Head of caudate nucleus (tissue), 42 donors: ENCODE measurements at regions of chr21 and their contacts with region 1.

Region 1: GRCh38 chr21:41612674-41613532 is 104.9 kb upstream of the TMPRSS2 start:
- DNase-seq: peak; percentile 29 to 86 (median 64)

Region 2: GRCh38 chr21:41419911-41420862 is 192.7 kb before region 1 on chr21:
- intact Hi-C with region 1: no loop called
- DNase-seq: peak; percentile 25 to 87 (median 64)

Region 3: DNA sequence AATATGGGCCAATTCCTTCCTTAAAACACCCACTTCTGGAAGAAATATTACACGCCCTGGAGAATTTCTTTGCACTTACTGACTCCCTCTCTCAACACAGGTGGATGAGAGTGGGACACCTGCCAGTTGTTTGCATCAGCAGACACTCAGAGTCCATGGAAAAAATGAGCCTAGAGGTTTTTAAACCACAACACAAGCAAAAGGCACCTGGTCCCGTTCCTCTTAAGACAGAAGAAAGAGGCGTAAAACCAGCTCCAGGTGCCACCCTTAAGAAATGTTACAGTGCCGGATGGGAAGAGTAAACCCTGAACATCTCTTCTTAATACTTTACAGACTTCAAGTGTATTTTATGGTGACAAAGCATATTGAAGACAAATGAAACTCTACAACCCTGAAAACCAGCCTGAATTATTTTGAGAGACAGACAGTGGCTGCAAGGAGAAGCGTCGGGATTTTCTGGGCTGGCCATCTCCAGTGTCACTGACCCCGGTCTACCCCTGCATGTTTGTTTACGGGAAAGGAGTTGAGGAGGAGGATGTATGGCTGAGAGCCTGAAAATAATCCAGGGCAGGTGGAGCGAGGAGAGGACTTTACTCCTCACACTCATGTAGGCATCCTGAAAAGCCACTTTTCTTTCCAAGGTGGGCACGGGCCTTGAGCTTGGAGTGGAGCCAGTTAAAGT is 161.7 kb after region 1 on chr21:
- intact Hi-C with region 1: loop called (anchors 5 kb)
- DNase-seq: peak in 1 of 42 donors; percentile 27

Region 4: DNA sequence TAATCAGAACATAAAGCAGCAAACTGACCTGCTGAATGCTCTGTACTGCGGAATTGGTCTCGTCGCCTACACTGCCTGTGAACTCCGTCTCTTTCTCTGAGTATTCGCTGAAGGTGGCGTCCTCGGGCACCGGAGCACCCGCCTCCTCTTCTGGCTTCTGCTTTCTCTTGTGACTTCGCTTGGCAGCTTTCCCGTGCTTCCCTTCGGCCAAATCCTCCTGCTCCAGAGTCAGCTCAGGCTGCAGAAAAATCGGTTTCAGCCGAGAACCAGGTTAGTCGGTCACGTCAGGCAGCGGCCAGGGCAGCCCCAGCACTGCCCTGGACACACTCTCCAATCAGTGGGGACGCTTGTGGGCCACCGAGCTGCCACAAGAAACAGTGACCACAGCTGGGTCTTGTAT is 189.8 kb after region 1 on chr21:
- intact Hi-C with region 1: loop called (anchors 10 kb)
- DNase-seq: peak; percentile 28 to 86 (median 72)

Region 5: DNA sequence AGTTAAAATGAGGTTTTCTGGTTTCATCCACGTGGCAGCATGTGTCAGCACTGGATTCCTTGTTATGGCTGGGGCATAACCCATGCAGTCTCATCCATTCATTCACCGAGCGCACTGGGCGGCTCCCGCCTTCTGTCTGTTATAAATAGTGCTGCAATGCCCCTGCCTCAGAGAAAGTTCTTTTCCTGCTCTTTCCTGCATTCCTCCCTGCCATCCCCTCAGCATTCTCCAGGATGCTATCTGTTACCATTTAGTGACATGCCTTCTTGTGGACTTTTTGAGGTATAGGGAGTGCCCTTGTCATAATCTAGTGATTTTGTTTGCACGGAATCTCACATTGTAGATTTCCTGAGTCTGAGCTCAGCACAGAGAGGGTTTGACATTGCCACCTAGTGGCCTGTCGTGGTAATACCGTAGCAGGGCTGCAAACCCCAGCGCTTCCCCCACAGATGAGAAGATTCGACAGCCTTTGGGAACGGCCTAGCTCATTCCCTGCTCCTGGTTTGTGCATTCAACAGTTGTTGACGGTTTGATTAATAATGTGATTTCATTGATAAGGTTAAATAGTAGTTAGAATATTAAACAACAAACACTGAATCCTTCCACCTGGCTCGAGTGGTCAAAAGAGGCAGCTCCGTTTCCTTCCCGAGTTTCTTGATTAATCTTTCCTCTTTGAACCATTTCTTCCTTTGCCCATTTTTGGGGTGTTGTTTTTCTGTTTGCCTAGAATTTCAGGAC is 504.5 kb after region 1 on chr21:
- intact Hi-C with region 1: loop called (anchors 10 kb)
- DNase-seq: peak; percentile 64 to 95 (median 87)